ENCODE measurements at regions of chr6 and their contacts with region 1.

Region 1: GRCh38 chr6:26031595-26032339 is 55.5 kb upstream of the HFE start:
- DNase-seq: peak; percentile 86 to 94 (median 89)
- H3K4me3 ChIP-seq: peak overlapping the region; percentile 53 to 67
- H3K4me3 Mint-ChIP-seq: peak overlapping the region; percentile 91 to 99 (median 94)
- H3K27ac ChIP-seq: peak overlapping the region; percentile 71
- H3K27ac Mint-ChIP-seq: peak overlapping the region; percentile 89 to 98 (median 96)
- H3K4me1 ChIP-seq: peaks cover 35% of the 10 kb centered on the region
- H3K4me1 Mint-ChIP-seq: peaks cover 33 to 54% (median 44%) of the 10 kb centered on the region in 4 donors
- H3K27me3 ChIP-seq: no peaks in the 10 kb centered on the region
- H3K27me3 Mint-ChIP-seq: peaks cover 0 to 3% of the 10 kb centered on the region in 2 donors

Region 2: DNA sequence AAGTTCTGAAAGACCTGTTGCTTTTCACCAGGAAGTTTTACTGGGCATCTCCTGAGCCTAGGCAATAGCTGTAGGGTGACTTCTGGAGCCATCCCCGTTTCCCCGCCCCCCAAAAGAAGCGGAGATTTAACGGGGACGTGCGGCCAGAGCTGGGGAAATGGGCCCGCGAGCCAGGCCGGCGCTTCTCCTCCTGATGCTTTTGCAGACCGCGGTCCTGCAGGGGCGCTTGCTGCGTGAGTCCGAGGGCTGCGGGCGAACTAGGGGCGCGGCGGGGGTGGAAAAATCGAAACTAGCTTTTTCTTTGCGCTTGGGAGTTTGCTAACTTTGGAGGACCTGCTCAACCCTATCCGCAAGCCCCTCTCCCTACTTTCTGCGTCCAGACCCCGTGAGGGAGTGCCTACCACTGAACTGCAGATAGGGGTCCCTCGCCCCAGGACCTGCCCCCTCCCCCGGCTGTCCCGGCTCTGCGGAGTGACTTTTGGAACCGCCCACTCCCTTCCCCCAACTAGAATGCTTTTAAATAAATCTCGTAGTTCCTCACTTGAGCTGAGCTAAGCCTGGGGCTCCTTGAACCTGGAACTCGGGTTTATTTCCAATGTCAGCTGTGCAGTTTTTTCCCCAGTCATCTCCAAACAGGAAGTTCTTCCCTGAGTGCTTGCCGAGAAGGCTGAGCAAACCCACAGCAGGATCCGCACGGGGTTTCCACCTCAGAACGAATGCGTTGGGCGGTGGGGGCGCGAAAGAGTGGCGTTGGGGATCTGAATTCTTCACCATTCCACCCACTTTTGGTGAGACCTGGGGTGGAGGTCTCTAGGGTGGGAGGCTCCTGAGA is 55.7 kb after region 1 on chr6 and contains the start of gene HFE:
- CTCF ChIA-PET with region 1: interaction called, 12 read pairs
- POLR2A ChIA-PET with region 1: interaction called, 28 read pairs
- intact Hi-C with region 1: no loop called
- DNase-seq: peak in 4 of 5 donors; percentile 24 to 43 (median 26)
- H3K4me3 ChIP-seq: peak within 1 kb of the TSS; percentile 67 to 79
- H3K4me3 Mint-ChIP-seq: peak within 1 kb of the TSS; percentile 77 to 93 (median 90)
- H3K27ac ChIP-seq: peak within 1 kb of the TSS; percentile 68
- H3K27ac Mint-ChIP-seq: peak within 1 kb of the TSS; percentile 71 to 94 (median 90)
- H3K4me1 ChIP-seq: peaks cover 36% of the 10 kb centered on the region
- H3K4me1 Mint-ChIP-seq: peaks cover 20 to 41% (median 28%) of the 10 kb centered on the region in 4 donors
- H3K27me3 ChIP-seq: no peaks in the 10 kb centered on the region
- H3K27me3 Mint-ChIP-seq: no peaks in the 10 kb centered on the region
- total RNA-seq, gene HFE: 3.5 to 4.2 TPM

Region 3: GRCh38 chr6:26183581-26184366 is 152.0 kb after region 1 on chr6:
- CTCF ChIA-PET with region 1: interaction called, 7 read pairs
- POLR2A ChIA-PET with region 1: interaction called, 12 read pairs
- intact Hi-C with region 1: no loop called
- DNase-seq: peak; percentile 72 to 81 (median 79)
- H3K4me3 ChIP-seq: peak overlapping the region; percentile 2 to 69
- H3K4me3 Mint-ChIP-seq: peak overlapping the region; percentile 90 to 100 (median 96)
- H3K27ac ChIP-seq: peak overlapping the region; percentile 67
- H3K27ac Mint-ChIP-seq: peak overlapping the region; percentile 78 to 99 (median 95)
- H3K4me1 ChIP-seq: peaks cover 45% of the 10 kb centered on the region
- H3K4me1 Mint-ChIP-seq: peaks cover 29 to 54% (median 37%) of the 10 kb centered on the region in 4 donors
- H3K27me3 ChIP-seq: no peaks in the 10 kb centered on the region
- H3K27me3 Mint-ChIP-seq: no peaks in the 10 kb centered on the region

Region 4: GRCh38 chr6:27864906-27865849 is 1833.4 kb after region 1 on chr6:
- CTCF ChIA-PET with region 1: interaction called, 4 read pairs
- POLR2A ChIA-PET with region 1: interaction called, 26 read pairs
- intact Hi-C with region 1: no loop called
- DNase-seq: peak; percentile 86 to 93 (median 91)
- H3K4me3 ChIP-seq: peak overlapping the region; percentile 33 to 69
- H3K4me3 Mint-ChIP-seq: peak overlapping the region; percentile 96 to 99 (median 99)
- H3K27ac ChIP-seq: peak overlapping the region; percentile 62
- H3K27ac Mint-ChIP-seq: peak overlapping the region; percentile 94 to 99 (median 98)
- H3K4me1 ChIP-seq: peaks cover 31% of the 10 kb centered on the region
- H3K4me1 Mint-ChIP-seq: peaks cover 18 to 46% (median 34%) of the 10 kb centered on the region in 4 donors
- H3K27me3 ChIP-seq: no peaks in the 10 kb centered on the region
- H3K27me3 Mint-ChIP-seq: no peaks in the 10 kb centered on the region